ENCODE measurements at regions of chr6 and their contacts with region 1.

Region 1: GRCh38 chr6:12289933-12290820 is at the start of gene EDN1:
- DNase-seq: peak; percentile 85 to 99
- H3K4me3 ChIP-seq: peak within 1 kb of the TSS; percentile 72
- H3K27ac ChIP-seq: peak within 1 kb of the TSS; percentile 92
- H3K4me1 ChIP-seq: peaks cover 66% of the 10 kb centered on the region
- H3K27me3 ChIP-seq: no peaks in the 10 kb centered on the region
- CTCF ChIP-seq: peak; percentile 45; the same call in 1 of the 2 replicates
- total RNA-seq, gene EDN1: 3.3 and 5.9 TPM in 2 replicates

Region 2: DNA sequence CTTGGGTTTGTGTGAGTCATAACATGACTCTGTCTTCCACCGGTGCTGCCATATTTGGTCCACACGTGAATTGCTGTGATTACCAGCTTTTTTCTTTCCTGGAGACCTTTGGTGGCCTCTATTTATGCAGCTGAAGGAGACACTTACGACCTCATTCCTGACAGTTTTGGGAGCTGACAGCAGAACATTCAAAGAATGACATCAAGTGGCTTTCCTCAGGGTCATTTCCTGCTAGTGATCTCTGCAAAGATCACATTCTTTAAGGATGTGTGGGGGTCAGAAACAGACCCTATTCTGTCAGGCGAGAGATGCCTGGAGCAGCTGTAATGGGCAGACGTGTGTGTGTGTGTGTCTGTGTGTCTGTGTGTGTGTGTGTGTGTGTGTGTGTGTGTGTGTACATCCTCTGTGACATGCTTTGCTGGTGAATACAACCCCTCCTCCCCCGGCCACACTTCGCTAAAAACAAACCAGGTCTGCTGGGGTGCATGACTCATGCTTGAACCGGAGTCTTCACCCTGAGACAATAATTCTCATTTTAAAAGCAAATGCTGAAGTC is 637.1 kb before region 1 on chr6:
- CTCF ChIA-PET with region 1: interaction called, 13 read pairs
- POLR2A ChIA-PET with region 1: interaction called, 15 read pairs
- intact Hi-C with region 1: no loop called
- DNase-seq: peak; percentile 55 to 69
- H3K4me3 ChIP-seq: no peak overlapping the region
- H3K27ac ChIP-seq: peak overlapping the region; percentile 15; the same call in 1 of the 2 replicates
- H3K4me1 ChIP-seq: peaks cover 48% of the 10 kb centered on the region
- H3K27me3 ChIP-seq: no peaks in the 10 kb centered on the region
- CTCF ChIP-seq: no peak

Region 3: GRCh38 chr6:11964729-11965335 is 325.3 kb before region 1 on chr6:
- CTCF ChIA-PET with region 1: no interaction called
- POLR2A ChIA-PET with region 1: no interaction called
- intact Hi-C with region 1: no loop called
- DNase-seq: no peak
- H3K4me3 ChIP-seq: no peak overlapping the region
- H3K27ac ChIP-seq: no peak overlapping the region
- H3K4me1 ChIP-seq: no peaks in the 10 kb centered on the region
- H3K27me3 ChIP-seq: no peaks in the 10 kb centered on the region
- CTCF ChIP-seq: no peak

Region 4: DNA sequence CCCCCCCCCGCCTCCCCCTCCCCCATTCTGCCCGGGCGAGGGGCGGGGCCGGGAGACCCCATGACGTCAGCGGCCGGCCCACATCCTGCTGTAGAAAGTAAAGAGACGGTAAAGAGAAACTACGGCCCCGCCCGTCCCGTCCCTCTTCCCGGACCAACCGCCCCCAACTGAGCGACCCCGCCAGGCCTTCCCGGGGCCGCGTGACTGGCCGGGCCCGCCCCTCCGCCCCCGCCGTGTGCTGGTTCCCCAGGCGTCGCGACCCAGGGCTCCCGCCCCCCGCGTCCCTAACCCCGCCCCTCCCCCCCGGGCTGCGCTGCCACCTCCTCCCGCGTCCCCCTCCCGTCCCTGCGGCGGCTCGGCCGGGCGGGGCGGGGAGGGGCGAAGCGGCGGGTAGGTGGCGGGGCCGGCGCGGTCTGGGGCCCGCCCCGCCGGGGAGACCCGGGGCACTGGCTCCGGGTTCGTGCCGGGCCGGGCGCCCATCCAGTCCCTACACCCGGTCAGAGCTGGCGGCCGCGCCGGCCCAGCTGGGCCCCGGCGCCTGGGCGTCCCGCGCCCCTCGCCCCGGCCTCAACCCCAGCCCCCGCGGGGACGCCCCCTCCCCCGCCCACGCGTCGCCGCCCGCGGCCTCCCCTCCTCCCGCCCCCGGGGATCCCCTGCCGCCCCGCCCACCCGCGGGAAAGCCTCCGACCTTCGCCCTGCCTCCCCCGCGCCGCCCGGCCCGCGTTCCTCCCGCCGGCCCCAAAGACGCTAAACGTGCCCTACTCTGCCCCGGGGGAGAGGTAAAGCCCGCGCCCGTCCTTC is 278.7 kb before region 1 on chr6:
- CTCF ChIA-PET with region 1: no interaction called
- POLR2A ChIA-PET with region 1: no interaction called
- intact Hi-C with region 1: loop called (anchors 1 kb)
- DNase-seq: peak; percentile 95 to 97
- H3K4me3 ChIP-seq: peak overlapping the region; percentile 87; the same call in 1 of the 2 replicates
- H3K27ac ChIP-seq: peak overlapping the region; percentile 96; the same call in 1 of the 2 replicates
- H3K4me1 ChIP-seq: peaks cover 41% of the 10 kb centered on the region
- H3K27me3 ChIP-seq: no peaks in the 10 kb centered on the region
- CTCF ChIP-seq: no peak

Region 5: GRCh38 chr6:12233693-12234571 is 56.2 kb before region 1 on chr6:
- CTCF ChIA-PET with region 1: interaction called, 4 read pairs
- POLR2A ChIA-PET with region 1: no interaction called
- intact Hi-C with region 1: loop called (anchors 1 kb)
- DNase-seq: peak; percentile 47 to 84
- H3K4me3 ChIP-seq: no peak overlapping the region
- H3K27ac ChIP-seq: no peak overlapping the region
- H3K4me1 ChIP-seq: peaks cover 5% of the 10 kb centered on the region
- H3K27me3 ChIP-seq: no peaks in the 10 kb centered on the region
- CTCF ChIP-seq: peak; percentile 95

Region 6: DNA sequence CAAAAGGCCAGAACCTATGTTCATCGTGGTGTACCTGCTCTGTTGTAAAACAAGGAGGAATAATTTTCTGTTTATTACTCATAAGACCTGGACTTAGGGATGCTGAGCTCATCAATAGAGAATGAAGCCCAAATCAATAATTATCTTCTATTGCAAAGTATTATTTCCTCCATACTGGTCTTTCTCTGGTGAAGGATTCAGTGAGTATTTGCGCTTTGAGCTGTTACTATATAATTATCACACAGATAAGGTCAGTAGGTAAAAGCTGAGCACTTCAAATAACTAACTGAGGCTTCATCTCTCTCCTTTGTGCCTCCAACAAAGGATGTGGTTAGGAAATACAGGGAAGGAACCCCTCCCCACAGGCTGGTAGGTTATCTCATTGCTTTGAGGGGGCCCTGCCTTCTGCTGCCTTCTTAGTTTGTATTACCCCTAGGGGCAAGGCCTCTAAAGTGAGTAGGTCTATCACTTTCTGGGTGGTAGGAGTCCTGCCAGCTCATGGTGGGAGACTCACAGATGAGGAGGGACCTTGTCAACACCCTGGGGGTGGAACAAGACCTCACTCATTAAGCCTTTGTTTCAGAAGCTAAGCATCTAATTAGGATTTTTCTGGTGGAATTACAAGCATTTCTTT is 34.5 kb after region 1 on chr6:
- CTCF ChIA-PET with region 1: no interaction called
- POLR2A ChIA-PET with region 1: interaction called, 18 read pairs
- intact Hi-C with region 1: loop called (anchors 2 kb)
- DNase-seq: peak; percentile 31 to 56
- H3K4me3 ChIP-seq: peak overlapping the region; percentile 6; the same call in 1 of the 2 replicates
- H3K27ac ChIP-seq: peak overlapping the region; percentile 95
- H3K4me1 ChIP-seq: peaks cover 41% of the 10 kb centered on the region
- H3K27me3 ChIP-seq: no peaks in the 10 kb centered on the region
- CTCF ChIP-seq: no peak

Region 7: DNA sequence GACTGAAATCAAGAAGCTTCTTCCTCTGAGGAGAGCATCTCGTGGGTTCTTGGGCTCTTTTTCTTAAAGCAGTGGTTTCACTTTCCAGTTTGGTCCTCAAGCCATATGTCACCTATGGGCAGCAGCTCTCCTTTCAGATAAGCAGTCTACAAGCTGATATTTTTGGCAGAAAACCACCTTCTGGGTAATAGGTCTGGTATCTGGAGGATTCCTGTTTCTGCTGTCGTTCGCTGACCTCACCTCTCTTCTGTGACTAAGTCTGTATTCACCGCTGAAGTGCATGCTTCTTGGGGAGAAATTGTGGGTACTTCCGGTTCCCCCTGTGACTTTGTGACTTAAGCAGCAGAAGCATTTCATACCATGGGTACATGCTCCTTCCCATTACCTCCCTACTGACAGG is 193.5 kb after region 1 on chr6:
- CTCF ChIA-PET with region 1: no interaction called
- POLR2A ChIA-PET with region 1: interaction called, 6 read pairs
- intact Hi-C with region 1: loop called (anchors 2 kb)
- DNase-seq: peak; percentile 70 to 99
- H3K4me3 ChIP-seq: peak overlapping the region; percentile 35; the same call in 1 of the 2 replicates
- H3K27ac ChIP-seq: peak overlapping the region; percentile 82
- H3K4me1 ChIP-seq: peaks cover 30% of the 10 kb centered on the region
- H3K27me3 ChIP-seq: no peaks in the 10 kb centered on the region
- CTCF ChIP-seq: no peak

Region 8: GRCh38 chr6:13189710-13190109 is 899.5 kb after region 1 on chr6:
- CTCF ChIA-PET with region 1: no interaction called
- POLR2A ChIA-PET with region 1: interaction called, 18 read pairs
- intact Hi-C with region 1: no loop called
- DNase-seq: no peak
- H3K4me3 ChIP-seq: no peak overlapping the region
- H3K27ac ChIP-seq: no peak overlapping the region
- H3K4me1 ChIP-seq: no peaks in the 10 kb centered on the region
- H3K27me3 ChIP-seq: peaks cover 84% of the 10 kb centered on the region
- CTCF ChIP-seq: no peak